Activated CD4-positive, alpha-beta T cell treated with anti-CD3 and anti-CD28 coated beads, Interleukin-2, amount 10 ng/mL, durations not matched to agents 24 days and 14 days (primary cell): ENCODE measurements at regions of chr1 and their contacts with region 1.

Region 1: DNA sequence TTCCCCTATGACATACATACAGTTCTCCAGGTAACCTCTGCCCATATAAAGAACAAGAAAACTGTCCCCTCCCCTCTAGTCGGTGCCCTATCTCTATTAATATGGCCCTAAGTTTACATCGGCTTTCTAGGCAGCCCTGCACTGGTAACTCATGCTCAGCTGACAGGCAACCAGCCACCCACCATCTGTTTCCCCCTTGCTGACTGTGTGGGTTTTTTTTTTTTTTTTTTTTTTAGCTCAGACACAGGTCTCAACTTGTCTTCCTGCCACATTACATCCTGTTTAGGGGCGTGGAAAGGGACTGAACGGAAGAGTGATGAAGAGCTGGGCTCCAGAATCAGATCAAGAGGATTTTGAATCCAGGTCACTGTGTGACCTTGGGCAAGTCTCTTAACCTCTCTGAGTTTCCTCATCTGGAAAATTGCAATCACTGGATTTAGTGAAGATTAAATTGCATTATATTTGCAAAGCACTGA is 14.0 kb downstream of the LAPTM5 start:
- DNase-seq: peak; percentile 92
- H3K4me3 Mint-ChIP-seq: peak overlapping the region; percentile 89
- H3K27ac Mint-ChIP-seq: peak overlapping the region; percentile 99
- H3K4me1 Mint-ChIP-seq: peaks cover 91% of the 10 kb centered on the region
- H3K27me3 Mint-ChIP-seq: no peaks in the 10 kb centered on the region

Region 2: GRCh38 chr1:30732277-30732996 is 11.2 kb before region 1 on chr1:
- intact Hi-C with region 1: loop called (anchors 1 kb)
- DNase-seq: peak; percentile 59
- H3K4me3 Mint-ChIP-seq: no peak overlapping the region
- H3K27ac Mint-ChIP-seq: peak overlapping the region; percentile 82
- H3K4me1 Mint-ChIP-seq: peaks cover 18% of the 10 kb centered on the region
- H3K27me3 Mint-ChIP-seq: peaks cover 2% of the 10 kb centered on the region

Region 3: GRCh38 chr1:30756545-30757195 is 13.0 kb after region 1 on chr1:
- intact Hi-C with region 1: loop called (anchors 2 kb)
- DNase-seq: peak; percentile 90
- H3K4me3 Mint-ChIP-seq: peak overlapping the region; percentile 100
- H3K27ac Mint-ChIP-seq: peak overlapping the region; percentile 97
- H3K4me1 Mint-ChIP-seq: peaks cover 82% of the 10 kb centered on the region
- H3K27me3 Mint-ChIP-seq: no peaks in the 10 kb centered on the region